ENCODE measurements at regions of chr9 and their contacts with region 1.

Region 1: DNA sequence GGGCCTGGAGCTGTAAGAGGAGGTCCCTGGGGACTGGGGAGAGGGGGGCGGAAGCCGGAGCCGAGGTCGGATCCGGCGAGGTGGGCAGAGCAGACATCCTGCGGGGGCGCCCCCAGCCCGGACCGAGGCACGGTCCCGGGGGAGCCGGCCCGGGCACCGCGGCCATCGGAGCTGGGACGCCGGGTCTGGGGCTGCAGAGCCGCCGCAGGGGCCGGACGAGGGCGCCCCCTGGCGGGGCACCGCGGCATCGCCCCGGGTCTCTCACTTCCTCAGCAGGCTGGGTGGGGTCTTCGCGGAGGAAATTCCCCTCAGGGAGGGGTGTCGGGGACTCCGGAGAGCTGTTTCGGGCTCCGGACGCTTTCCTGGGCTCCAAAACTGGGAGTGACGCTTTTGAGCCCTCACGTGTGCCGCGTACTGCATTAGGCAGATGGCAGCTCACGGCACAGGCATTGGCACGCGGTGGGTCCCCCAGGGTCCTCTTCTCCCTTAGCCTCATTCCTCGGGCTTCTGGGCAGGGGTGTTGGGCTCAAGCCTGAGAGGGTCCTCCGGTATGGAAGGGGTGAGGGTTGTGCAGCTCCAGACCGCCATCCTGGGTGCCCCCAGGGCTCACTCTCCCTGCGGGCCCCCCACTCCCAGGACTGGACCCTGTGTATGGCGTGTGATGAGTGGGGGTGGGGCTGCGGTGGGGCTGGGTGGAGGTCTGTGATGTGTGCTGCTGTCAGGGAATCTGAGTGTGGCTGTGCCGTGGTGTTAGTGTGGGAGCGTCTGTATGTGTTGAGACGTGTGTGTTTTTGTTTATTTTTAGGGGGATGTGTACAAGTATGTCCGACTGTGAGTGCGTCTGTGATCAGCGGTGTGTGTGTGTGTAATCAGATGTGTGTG is 29.6 kb downstream of the LHX2 start:
- DNase-seq: peak; percentile 59
- ATAC-seq: peak; percentile 58
- H3K4me3 Mint-ChIP-seq: peak overlapping the region; percentile 44
- H3K27ac Mint-ChIP-seq: no peak overlapping the region
- H3K4me1 Mint-ChIP-seq: peaks cover 15% of the 10 kb centered on the region
- H3K27me3 Mint-ChIP-seq: peaks cover 60% of the 10 kb centered on the region
- CTCF ChIP-seq: peak; percentile 99

Region 2: GRCh38 chr9:123544007-123544827 is 497.0 kb before region 1 on chr9:
- CTCF ChIA-PET with region 1: interaction called, 19 read pairs
- POLR2A ChIA-PET with region 1: no interaction called
- intact Hi-C with region 1: no loop called
- DNase-seq: peak; percentile 25
- ATAC-seq: no peak
- H3K4me3 Mint-ChIP-seq: no peak overlapping the region
- H3K27ac Mint-ChIP-seq: no peak overlapping the region
- H3K4me1 Mint-ChIP-seq: peaks cover 9% of the 10 kb centered on the region
- H3K27me3 Mint-ChIP-seq: no peaks in the 10 kb centered on the region
- CTCF ChIP-seq: peak; percentile 87

Region 3: GRCh38 chr9:123763910-123764588 is 277.1 kb before region 1 on chr9:
- CTCF ChIA-PET with region 1: no interaction called
- POLR2A ChIA-PET with region 1: no interaction called
- intact Hi-C with region 1: no loop called
- DNase-seq: no peak
- ATAC-seq: no peak
- H3K4me3 Mint-ChIP-seq: no peak overlapping the region
- H3K27ac Mint-ChIP-seq: no peak overlapping the region
- H3K4me1 Mint-ChIP-seq: no peaks in the 10 kb centered on the region
- H3K27me3 Mint-ChIP-seq: no peaks in the 10 kb centered on the region
- CTCF ChIP-seq: no peak

Region 4: DNA sequence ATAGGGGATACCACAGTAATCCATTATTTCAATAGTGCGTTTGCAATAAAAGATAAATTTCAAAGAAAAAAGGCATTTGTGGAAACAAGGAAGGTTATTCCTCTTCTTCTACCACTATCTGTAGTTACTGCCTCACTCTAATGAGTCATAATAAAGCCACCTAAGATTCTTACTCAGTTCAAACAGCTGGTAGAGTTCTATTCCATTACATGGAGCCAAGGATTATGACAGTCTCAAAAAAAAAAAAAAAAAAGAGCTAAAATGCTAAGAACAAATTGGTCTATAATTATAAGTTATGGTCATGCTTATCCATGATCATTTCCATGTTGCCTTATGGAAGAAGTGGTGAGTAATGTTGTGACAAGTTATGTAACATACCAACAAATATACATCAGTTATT is 157.5 kb before region 1 on chr9:
- CTCF ChIA-PET with region 1: no interaction called
- POLR2A ChIA-PET with region 1: no interaction called
- intact Hi-C with region 1: no loop called
- DNase-seq: no peak
- ATAC-seq: no peak
- H3K4me3 Mint-ChIP-seq: no peak overlapping the region
- H3K27ac Mint-ChIP-seq: no peak overlapping the region
- H3K4me1 Mint-ChIP-seq: peaks cover 15% of the 10 kb centered on the region
- H3K27me3 Mint-ChIP-seq: no peaks in the 10 kb centered on the region
- CTCF ChIP-seq: no peak

Region 5: GRCh38 chr9:123954518-123955280 is 86.5 kb before region 1 on chr9:
- CTCF ChIA-PET with region 1: interaction called, 33 read pairs
- POLR2A ChIA-PET with region 1: interaction called, 3 read pairs
- intact Hi-C with region 1: loop called (anchors 5 kb)
- DNase-seq: no peak
- ATAC-seq: no peak
- H3K4me3 Mint-ChIP-seq: no peak overlapping the region
- H3K27ac Mint-ChIP-seq: no peak overlapping the region
- H3K4me1 Mint-ChIP-seq: peaks cover 9% of the 10 kb centered on the region
- H3K27me3 Mint-ChIP-seq: peaks cover 16% of the 10 kb centered on the region
- CTCF ChIP-seq: no peak

Region 6: GRCh38 chr9:123960366-123960765 is 80.8 kb before region 1 on chr9:
- CTCF ChIA-PET with region 1: interaction called, 33 read pairs
- POLR2A ChIA-PET with region 1: interaction called, 3 read pairs
- intact Hi-C with region 1: loop called (anchors 5 kb)
- DNase-seq: no peak
- ATAC-seq: no peak
- H3K4me3 Mint-ChIP-seq: no peak overlapping the region
- H3K27ac Mint-ChIP-seq: no peak overlapping the region
- H3K4me1 Mint-ChIP-seq: peaks cover 6% of the 10 kb centered on the region
- H3K27me3 Mint-ChIP-seq: peaks cover 27% of the 10 kb centered on the region
- CTCF ChIP-seq: peak; percentile 45

Region 7: DNA sequence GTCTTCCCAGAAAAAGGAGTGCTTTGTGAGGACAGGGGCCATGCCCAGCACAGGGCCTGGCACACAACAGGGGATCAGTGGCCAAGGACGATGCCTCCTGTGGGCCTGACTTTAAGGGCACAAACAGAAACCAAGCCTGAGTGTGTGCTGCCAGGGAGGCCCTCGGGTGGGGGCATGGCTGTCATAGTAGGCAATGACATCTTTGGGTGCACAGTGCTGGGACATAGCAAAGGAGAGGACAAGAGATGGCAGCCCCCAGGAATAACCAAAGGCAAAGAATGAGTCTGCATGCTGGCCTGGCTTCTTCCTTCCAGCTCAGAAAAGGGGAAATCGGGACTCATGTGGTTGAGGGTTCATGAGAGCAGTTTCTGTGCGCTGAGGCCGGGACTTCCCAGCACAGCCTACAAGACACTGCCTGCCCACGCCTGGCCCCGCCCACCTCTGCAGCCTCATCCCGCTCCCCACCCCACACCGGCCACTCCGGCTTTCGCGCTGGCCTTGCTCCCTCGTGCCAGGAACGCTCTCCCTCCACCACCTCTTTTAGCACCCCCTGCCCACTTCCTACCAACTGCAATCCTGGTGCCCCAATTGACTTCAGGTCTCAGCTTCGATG is 43.4 kb before region 1 on chr9:
- CTCF ChIA-PET with region 1: interaction called, 16 read pairs
- POLR2A ChIA-PET with region 1: no interaction called
- intact Hi-C with region 1: no loop called
- DNase-seq: peak; percentile 62
- ATAC-seq: peak; percentile 63
- H3K4me3 Mint-ChIP-seq: peak overlapping the region; percentile 25
- H3K27ac Mint-ChIP-seq: no peak overlapping the region
- H3K4me1 Mint-ChIP-seq: peaks cover 37% of the 10 kb centered on the region
- H3K27me3 Mint-ChIP-seq: peaks cover 72% of the 10 kb centered on the region
- CTCF ChIP-seq: no peak

Region 8: GRCh38 chr9:124054582-124055227 is 13.5 kb after region 1 on chr9:
- CTCF ChIA-PET with region 1: interaction called, 47 read pairs
- POLR2A ChIA-PET with region 1: interaction called, 4 read pairs
- intact Hi-C with region 1: no loop called
- DNase-seq: peak; percentile 70
- ATAC-seq: peak; percentile 98
- H3K4me3 Mint-ChIP-seq: no peak overlapping the region
- H3K27ac Mint-ChIP-seq: no peak overlapping the region
- H3K4me1 Mint-ChIP-seq: peaks cover 2% of the 10 kb centered on the region
- H3K27me3 Mint-ChIP-seq: peaks cover 30% of the 10 kb centered on the region
- CTCF ChIP-seq: no peak

Region 9: DNA sequence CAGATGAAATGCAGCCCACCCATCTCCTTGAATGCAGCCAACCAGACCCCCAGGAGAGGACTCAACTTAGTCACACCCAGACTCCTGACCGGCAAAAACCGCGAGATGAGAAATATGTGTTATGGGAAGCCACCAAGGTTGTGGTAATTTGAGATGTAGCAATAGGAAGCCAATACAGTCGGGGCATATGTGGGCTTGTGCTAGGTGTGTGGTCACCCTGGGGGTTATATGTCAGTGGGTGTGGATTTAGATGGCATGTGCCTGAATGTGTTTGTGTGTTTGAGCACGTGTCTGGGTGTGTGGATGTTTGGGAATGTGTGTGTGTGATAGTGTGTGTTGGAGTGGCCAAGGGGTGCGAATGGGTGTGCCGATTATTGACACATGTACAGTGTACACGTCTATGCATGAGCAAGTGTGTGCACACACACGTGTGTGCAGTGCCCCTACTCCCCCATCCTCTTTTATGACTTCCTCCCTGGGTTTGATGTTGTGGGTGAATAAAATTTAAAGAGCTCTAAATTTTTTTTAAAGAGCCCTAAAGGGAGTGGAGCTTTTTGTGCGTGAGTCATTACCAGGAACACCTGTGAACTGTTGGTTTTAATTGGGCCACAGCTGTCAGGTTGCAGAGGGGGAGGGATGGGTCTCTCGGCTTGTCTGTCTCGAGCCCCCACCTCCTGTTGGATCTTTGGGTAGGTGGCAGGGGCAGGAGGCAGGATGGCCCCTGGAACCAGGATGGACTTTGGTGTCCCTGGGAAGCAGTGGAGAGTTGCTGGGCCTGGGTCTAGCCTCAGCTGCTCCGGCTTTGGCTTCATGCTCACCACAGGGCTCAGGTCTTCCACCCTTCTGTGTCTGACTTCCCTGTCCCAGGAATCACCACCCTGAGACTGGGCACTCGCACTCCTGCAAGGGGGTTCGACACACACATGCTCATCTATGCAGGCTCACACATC is 57.2 kb after region 1 on chr9:
- CTCF ChIA-PET with region 1: no interaction called
- POLR2A ChIA-PET with region 1: no interaction called
- intact Hi-C with region 1: no loop called
- DNase-seq: no peak
- ATAC-seq: no peak
- H3K4me3 Mint-ChIP-seq: no peak overlapping the region
- H3K27ac Mint-ChIP-seq: no peak overlapping the region
- H3K4me1 Mint-ChIP-seq: no peaks in the 10 kb centered on the region
- H3K27me3 Mint-ChIP-seq: peaks cover 27% of the 10 kb centered on the region
- CTCF ChIP-seq: no peak

Measured in activated CD8-positive, alpha-beta T cell treated with anti-CD3 and anti-CD28 coated beads for 36 hours (primary cell).